Vagina (tissue), 2 donors: ENCODE measurements at regions of chr7 and their contacts with region 1.

Region 1: GRCh38 chr7:35860664-35861063 is 59.8 kb downstream of the SEPTIN7 start:
- DNase-seq: no peak
- H3K4me3 ChIP-seq: no peak overlapping the region
- H3K27ac ChIP-seq: no peak overlapping the region
- H3K4me1 ChIP-seq: peaks cover 15% of the 10 kb centered on the region
- H3K27me3 ChIP-seq: no peaks in the 10 kb centered on the region
- CTCF ChIP-seq: no peak
- POLR2A ChIP-seq: no peak

Region 2: DNA sequence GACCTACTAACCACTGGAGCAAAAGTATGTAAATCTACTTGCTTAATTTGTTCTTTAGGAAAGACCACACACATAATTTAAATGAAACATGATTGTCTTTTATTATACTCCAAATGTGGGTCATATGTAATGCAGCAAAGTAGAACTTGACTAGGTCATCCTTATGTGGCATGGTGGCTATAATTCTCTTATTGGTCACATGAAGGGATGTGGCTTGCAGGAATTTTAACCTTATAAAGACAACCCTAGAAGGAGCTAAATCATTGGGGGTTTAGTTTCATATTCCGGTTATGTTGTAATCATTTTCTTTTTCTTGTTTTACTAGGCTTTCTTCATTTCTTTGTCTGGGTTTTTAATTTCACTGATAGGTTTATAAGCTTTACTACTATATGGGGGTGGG is 34.1 kb after region 1 on chr7:
- intact Hi-C with region 1: loop called (anchors 5 kb)
- DNase-seq: no peak
- H3K4me3 ChIP-seq: no peak overlapping the region
- H3K27ac ChIP-seq: no peak overlapping the region
- H3K4me1 ChIP-seq: no peaks in the 10 kb centered on the region
- H3K27me3 ChIP-seq: no peaks in the 10 kb centered on the region
- CTCF ChIP-seq: no peak
- POLR2A ChIP-seq: no peak

Region 3: GRCh38 chr7:36001546-36001945 is 140.9 kb after region 1 on chr7:
- intact Hi-C with region 1: no loop called
- DNase-seq: no peak
- H3K4me3 ChIP-seq: no peak overlapping the region
- H3K27ac ChIP-seq: no peak overlapping the region
- H3K4me1 ChIP-seq: no peaks in the 10 kb centered on the region
- H3K27me3 ChIP-seq: no peaks in the 10 kb centered on the region
- CTCF ChIP-seq: no peak
- POLR2A ChIP-seq: no peak

Region 4: GRCh38 chr7:36468370-36469101 is 607.9 kb after region 1 on chr7:
- intact Hi-C with region 1: no loop called
- DNase-seq: no peak
- H3K4me3 ChIP-seq: no peak overlapping the region
- H3K27ac ChIP-seq: no peak overlapping the region
- H3K4me1 ChIP-seq: no peaks in the 10 kb centered on the region
- H3K27me3 ChIP-seq: no peaks in the 10 kb centered on the region
- CTCF ChIP-seq: no peak
- POLR2A ChIP-seq: no peak